ENCODE measurements at regions of chr11 and their contacts with region 1.

Region 1: GRCh38 chr11:35257281-35257680 is 118.3 kb downstream of the CD44 start:
- DNase-seq: peak in 4 of 5 donors; percentile 27 to 51 (median 39)
- H3K4me3 ChIP-seq: peak overlapping the region in 1 of 2 donors; percentile 20
- H3K4me3 Mint-ChIP-seq: peak overlapping the region in 7 of 8 donors; percentile 43 to 79 (median 62)
- H3K27ac ChIP-seq: no peak overlapping the region
- H3K27ac Mint-ChIP-seq: peak overlapping the region; percentile 4 to 96 (median 94)
- H3K4me1 ChIP-seq: peaks cover 26% of the 10 kb centered on the region
- H3K4me1 Mint-ChIP-seq: peaks cover 19 to 39% (median 24%) of the 10 kb centered on the region in 4 donors
- H3K27me3 ChIP-seq: no peaks in the 10 kb centered on the region
- H3K27me3 Mint-ChIP-seq: peaks cover 0 to 1% of the 10 kb centered on the region in 2 donors

Region 2: GRCh38 chr11:35246745-35247144 is 10.5 kb before region 1 on chr11:
- CTCF ChIA-PET with region 1: no interaction called
- POLR2A ChIA-PET with region 1: interaction called, 29 read pairs
- intact Hi-C with region 1: loop called (anchors 1 kb)
- DNase-seq: no peak
- H3K4me3 ChIP-seq: no peak overlapping the region
- H3K4me3 Mint-ChIP-seq: peak overlapping the region in 5 of 8 donors; percentile 18 to 77 (median 67)
- H3K27ac ChIP-seq: peak overlapping the region; percentile 47
- H3K27ac Mint-ChIP-seq: peak overlapping the region; percentile 95 to 99 (median 98)
- H3K4me1 ChIP-seq: peaks cover 72% of the 10 kb centered on the region
- H3K4me1 Mint-ChIP-seq: peaks cover 47 to 78% (median 62%) of the 10 kb centered on the region in 4 donors
- H3K27me3 ChIP-seq: no peaks in the 10 kb centered on the region
- H3K27me3 Mint-ChIP-seq: no peaks in the 10 kb centered on the region

Region 3: GRCh38 chr11:35272391-35272902 is 15.2 kb after region 1 on chr11:
- CTCF ChIA-PET with region 1: interaction called, 3 read pairs
- POLR2A ChIA-PET with region 1: interaction called, 7 read pairs
- intact Hi-C with region 1: loop called (anchors 2 kb)
- DNase-seq: peak; percentile 25 to 68 (median 30)
- H3K4me3 ChIP-seq: peak overlapping the region in 1 of 2 donors; percentile 3
- H3K4me3 Mint-ChIP-seq: peak overlapping the region in 7 of 8 donors; percentile 35 to 73 (median 56)
- H3K27ac ChIP-seq: no peak overlapping the region
- H3K27ac Mint-ChIP-seq: peak overlapping the region; percentile 23 to 96 (median 81)
- H3K4me1 ChIP-seq: peaks cover 30% of the 10 kb centered on the region
- H3K4me1 Mint-ChIP-seq: peaks cover 19 to 53% (median 40%) of the 10 kb centered on the region in 4 donors
- H3K27me3 ChIP-seq: no peaks in the 10 kb centered on the region
- H3K27me3 Mint-ChIP-seq: no peaks in the 10 kb centered on the region

Region 4: GRCh38 chr11:35458846-35459245 is 201.6 kb after region 1 on chr11:
- CTCF ChIA-PET with region 1: no interaction called
- POLR2A ChIA-PET with region 1: no interaction called
- intact Hi-C with region 1: no loop called
- DNase-seq: no peak
- H3K4me3 ChIP-seq: no peak overlapping the region
- H3K4me3 Mint-ChIP-seq: no peak overlapping the region
- H3K27ac ChIP-seq: no peak overlapping the region
- H3K27ac Mint-ChIP-seq: no peak overlapping the region
- H3K4me1 ChIP-seq: no peaks in the 10 kb centered on the region
- H3K4me1 Mint-ChIP-seq: no peaks in the 10 kb centered on the region
- H3K27me3 ChIP-seq: no peaks in the 10 kb centered on the region
- H3K27me3 Mint-ChIP-seq: peaks cover 17 to 31% of the 10 kb centered on the region in 2 donors